Activated CD4-positive, alpha-beta memory T cell treated with anti-CD3 and anti-CD28 coated beads for 36 hours (primary cell): ENCODE measurements at regions of chr10 and their contacts with region 1.

Region 1: DNA sequence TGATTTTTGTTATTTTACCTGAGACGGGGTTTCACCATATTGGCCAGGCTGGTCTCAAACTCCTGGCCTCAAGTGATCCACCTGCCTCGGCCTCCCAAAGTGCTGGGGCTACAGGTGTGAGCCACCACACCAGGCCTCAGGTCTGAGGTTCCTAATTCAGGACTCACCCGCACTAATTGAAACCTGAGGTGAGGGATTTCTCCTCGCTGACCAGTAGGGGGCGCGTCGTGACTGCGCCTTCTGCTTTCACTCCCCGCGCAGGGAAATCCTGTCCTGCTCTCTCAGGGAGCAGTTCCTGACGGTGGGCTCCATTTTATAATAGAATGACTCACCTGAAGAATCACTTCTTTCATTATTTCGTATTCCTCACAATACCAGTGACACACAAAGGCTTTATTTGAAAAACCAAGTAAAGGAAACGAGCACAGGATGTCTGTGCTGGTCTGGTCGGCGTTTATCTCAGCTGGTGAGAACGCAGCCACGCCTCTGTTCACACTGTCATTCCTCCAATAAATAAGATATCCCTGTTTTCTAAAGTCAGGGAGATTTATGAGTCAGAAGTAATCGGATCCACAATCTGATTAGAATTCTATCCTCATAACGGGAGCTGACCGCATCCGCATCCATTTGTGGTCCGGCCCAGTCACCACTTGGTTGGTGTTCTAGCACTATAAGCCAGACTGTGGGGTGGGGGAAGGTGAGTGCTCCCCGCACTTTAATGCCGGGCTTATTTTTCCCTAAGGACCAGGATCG is 35.4 kb downstream of the BAG3 start:
- DNase-seq: peak; percentile 90
- H3K4me3 Mint-ChIP-seq: peak overlapping the region; percentile 25
- H3K27ac Mint-ChIP-seq: peak overlapping the region; percentile 30
- H3K4me1 Mint-ChIP-seq: peaks cover 21% of the 10 kb centered on the region
- H3K27me3 Mint-ChIP-seq: no peaks in the 10 kb centered on the region

Region 2: DNA sequence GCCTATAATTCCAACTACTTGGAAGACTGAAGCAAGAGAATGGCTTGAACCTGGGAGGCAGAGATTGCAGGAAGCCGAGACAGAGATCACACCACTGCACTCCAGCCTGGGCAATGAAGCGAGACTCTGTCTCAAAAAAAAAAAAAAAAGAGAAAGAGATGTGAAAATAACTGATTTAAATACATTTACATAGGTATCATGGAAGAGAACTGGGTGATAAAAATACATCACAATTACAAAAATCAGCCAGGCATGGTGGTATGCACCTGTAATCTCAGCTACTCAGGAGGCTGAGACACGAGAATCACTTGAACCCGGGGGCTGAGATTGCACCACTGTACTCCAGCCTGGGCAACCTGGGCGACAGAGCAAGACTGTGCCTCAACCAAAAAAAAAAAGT is 637.3 kb before region 1 on chr10:
- CTCF ChIA-PET with region 1: no interaction called
- POLR2A ChIA-PET with region 1: no interaction called
- intact Hi-C with region 1: no loop called
- DNase-seq: no peak
- H3K4me3 Mint-ChIP-seq: no peak overlapping the region
- H3K27ac Mint-ChIP-seq: no peak overlapping the region
- H3K4me1 Mint-ChIP-seq: peaks cover 21% of the 10 kb centered on the region
- H3K27me3 Mint-ChIP-seq: no peaks in the 10 kb centered on the region

Region 3: GRCh38 chr10:119542988-119543813 is 143.4 kb before region 1 on chr10:
- CTCF ChIA-PET with region 1: no interaction called
- POLR2A ChIA-PET with region 1: no interaction called
- intact Hi-C with region 1: no loop called
- DNase-seq: peak; percentile 79
- H3K4me3 Mint-ChIP-seq: peak overlapping the region; percentile 81
- H3K27ac Mint-ChIP-seq: peak overlapping the region; percentile 87
- H3K4me1 Mint-ChIP-seq: peaks cover 33% of the 10 kb centered on the region
- H3K27me3 Mint-ChIP-seq: no peaks in the 10 kb centered on the region

Region 4: DNA sequence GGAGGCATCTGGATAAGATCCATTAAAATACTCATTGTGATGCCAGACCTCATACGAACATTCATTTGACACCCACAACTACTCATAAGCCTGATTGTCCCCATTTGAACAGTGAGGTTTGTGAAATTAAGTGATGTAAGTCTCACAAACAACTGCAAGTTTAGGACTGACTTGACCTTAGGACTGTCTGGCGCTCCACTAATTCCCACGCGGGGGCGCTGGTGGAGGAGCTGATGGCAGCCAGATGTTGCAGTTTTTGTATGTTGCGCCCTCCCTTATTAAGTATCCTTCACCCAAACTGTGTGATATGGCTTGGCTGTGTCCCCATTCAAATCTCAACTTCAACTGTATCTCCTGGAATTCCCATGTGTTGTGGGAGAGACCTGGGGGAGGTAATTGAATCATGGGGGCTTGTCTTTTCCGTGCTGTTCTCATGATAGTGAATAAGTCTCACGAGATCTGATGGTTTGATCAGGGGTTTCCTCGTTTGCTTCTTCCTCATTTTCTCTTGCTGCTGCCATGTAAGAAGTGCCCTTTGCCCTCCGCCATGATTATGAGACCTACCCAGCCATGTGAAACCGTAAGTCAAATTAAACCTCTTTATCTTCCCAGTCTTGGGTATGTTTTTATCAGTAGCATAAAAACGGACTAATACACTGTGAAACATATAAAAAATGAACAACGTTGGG is 69.6 kb before region 1 on chr10:
- CTCF ChIA-PET with region 1: no interaction called
- POLR2A ChIA-PET with region 1: no interaction called
- intact Hi-C with region 1: no loop called
- DNase-seq: peak; percentile 46
- H3K4me3 Mint-ChIP-seq: no peak overlapping the region
- H3K27ac Mint-ChIP-seq: no peak overlapping the region
- H3K4me1 Mint-ChIP-seq: peaks cover 3% of the 10 kb centered on the region
- H3K27me3 Mint-ChIP-seq: no peaks in the 10 kb centered on the region

Region 5: DNA sequence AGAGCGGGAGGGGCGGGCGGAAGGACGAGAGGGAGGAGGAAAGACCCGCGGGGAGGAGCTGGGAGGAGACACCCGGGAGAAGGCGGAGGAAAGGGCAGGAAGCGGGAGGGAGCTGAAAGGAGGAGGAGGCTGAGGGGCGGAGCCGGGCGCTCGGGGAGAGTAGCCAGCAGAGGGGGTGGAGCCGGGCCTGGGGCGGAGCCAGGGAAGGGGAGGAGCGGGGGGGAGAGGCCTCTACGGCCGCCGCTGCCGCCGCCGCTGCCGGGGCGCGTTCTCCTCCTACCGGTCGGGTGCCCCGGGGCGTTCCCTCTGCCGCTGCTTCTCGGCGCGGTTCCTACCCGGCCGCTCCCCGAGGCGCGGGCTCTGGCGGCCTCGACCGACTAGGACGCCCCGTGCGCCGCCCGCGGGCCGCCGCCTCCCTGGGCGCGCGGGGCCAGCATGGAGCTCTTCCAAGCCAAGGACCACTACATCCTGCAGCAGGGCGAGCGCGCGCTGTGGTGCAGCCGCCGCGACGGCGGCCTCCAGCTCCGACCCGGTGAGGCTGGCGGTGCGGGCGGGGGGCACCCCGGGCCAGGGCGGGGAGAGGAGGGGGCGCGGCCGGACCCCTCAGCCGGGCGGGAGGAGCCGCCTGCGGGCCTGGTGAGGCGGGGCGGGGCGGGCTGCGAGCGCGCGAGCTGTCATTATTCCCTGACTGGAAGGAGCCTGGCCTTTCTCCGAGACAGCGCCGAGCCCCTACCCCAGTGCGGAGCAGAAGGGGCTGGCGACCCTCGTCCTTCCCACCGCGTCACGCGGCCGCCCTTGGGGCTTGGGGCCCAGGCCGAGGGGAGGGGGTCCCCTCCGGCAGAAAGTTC is 39.4 kb after region 1 on chr10 and contains the start of gene INPP5F:
- CTCF ChIA-PET with region 1: interaction called, 31 read pairs
- POLR2A ChIA-PET with region 1: no interaction called
- intact Hi-C with region 1: loop called (anchors 1 kb)
- DNase-seq: peak; percentile 100
- H3K4me3 Mint-ChIP-seq: peak within 1 kb of the TSS; percentile 91
- H3K27ac Mint-ChIP-seq: peak within 1 kb of the TSS; percentile 76
- H3K4me1 Mint-ChIP-seq: peaks cover 42% of the 10 kb centered on the region
- H3K27me3 Mint-ChIP-seq: no peaks in the 10 kb centered on the region
- total RNA-seq, gene INPP5F: 12.8 to 13.6 TPM

Region 6: DNA sequence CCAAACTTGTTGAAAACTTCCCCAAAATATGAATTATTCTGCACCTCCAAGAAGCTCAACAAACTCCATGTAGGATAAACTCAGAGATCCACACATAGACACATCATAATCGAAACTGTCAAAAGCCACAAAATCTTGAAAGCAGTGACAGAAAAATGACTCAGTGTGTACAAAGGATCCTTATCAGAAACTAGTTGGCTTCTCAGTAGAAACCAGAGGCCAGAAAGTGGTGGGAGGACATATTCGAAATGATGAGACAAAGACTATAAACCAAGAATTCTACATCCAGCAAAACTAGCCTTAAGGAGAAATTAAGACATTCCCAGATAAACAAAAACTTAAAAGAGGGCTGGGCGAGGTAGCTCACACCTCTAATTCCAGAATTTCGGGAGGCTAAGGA is 147.6 kb after region 1 on chr10:
- CTCF ChIA-PET with region 1: interaction called, 19 read pairs
- POLR2A ChIA-PET with region 1: no interaction called
- intact Hi-C with region 1: loop called (anchors 1 kb)
- DNase-seq: no peak
- H3K4me3 Mint-ChIP-seq: no peak overlapping the region
- H3K27ac Mint-ChIP-seq: peak overlapping the region; percentile 52
- H3K4me1 Mint-ChIP-seq: peaks cover 43% of the 10 kb centered on the region
- H3K27me3 Mint-ChIP-seq: no peaks in the 10 kb centered on the region

Region 7: DNA sequence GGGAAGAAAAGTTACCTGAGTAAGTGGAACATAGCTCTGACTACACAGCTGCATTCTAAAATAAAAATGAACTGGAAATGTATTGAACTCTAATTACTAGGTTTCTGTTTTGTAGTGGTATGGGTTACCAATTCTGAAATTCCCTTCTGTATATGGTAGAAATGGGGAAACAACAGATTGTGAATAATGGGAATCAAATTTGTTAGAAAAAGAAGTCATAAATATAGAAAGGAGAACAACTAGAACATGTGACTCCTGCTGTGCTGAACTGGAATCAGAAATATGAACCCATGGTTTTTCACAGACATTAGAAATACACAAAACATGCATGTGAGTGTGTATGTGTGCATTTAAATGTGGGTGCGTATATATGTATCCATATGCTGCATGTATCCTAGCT is 159.0 kb after region 1 on chr10:
- CTCF ChIA-PET with region 1: no interaction called
- POLR2A ChIA-PET with region 1: no interaction called
- intact Hi-C with region 1: no loop called
- DNase-seq: no peak
- H3K4me3 Mint-ChIP-seq: no peak overlapping the region
- H3K27ac Mint-ChIP-seq: no peak overlapping the region
- H3K4me1 Mint-ChIP-seq: no peaks in the 10 kb centered on the region
- H3K27me3 Mint-ChIP-seq: no peaks in the 10 kb centered on the region

Region 8: GRCh38 chr10:119919826-119920225 is 233.2 kb after region 1 on chr10:
- CTCF ChIA-PET with region 1: no interaction called
- POLR2A ChIA-PET with region 1: no interaction called
- intact Hi-C with region 1: loop called (anchors 5 kb)
- DNase-seq: no peak
- H3K4me3 Mint-ChIP-seq: no peak overlapping the region
- H3K27ac Mint-ChIP-seq: no peak overlapping the region
- H3K4me1 Mint-ChIP-seq: peaks cover 9% of the 10 kb centered on the region
- H3K27me3 Mint-ChIP-seq: no peaks in the 10 kb centered on the region

Region 9: DNA sequence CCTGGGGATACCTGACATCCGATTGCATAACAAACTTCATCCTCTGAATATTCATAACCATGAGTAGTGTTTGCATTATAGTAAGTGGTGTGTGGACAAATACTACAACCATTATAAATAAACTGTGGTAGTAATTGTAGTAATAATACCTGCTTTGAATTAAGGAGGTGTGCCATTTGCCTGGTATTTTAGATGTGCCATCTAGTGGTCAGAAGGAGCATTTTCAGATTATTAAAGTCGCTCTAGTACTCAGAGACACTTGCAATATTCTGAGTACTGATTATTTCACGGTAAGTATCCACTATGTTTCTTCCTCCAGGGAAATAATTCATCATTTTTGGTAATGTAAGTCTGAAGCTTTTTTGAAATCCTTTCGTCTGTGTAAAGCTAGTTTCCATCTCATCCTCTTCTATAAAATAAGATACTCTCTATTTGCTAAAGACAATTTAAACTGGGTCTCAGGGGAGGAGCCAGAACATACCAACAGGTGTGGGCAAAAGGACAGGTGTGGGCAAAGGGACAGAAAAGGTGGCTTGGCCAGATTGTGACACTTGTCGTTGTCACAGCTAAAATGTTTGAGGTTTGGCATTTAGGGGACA is 1049.3 kb after region 1 on chr10:
- CTCF ChIA-PET with region 1: no interaction called
- POLR2A ChIA-PET with region 1: no interaction called
- intact Hi-C with region 1: loop called (anchors 10 kb)
- DNase-seq: no peak
- H3K4me3 Mint-ChIP-seq: no peak overlapping the region
- H3K27ac Mint-ChIP-seq: no peak overlapping the region
- H3K4me1 Mint-ChIP-seq: no peaks in the 10 kb centered on the region
- H3K27me3 Mint-ChIP-seq: peaks cover 3% of the 10 kb centered on the region